ENCODE measurements at regions of chr22 and their contacts with region 1.

Region 1: GRCh38 chr22:29581807-29582206 is 894 bp upstream of the NIPSNAP1 start:
- DNase-seq: no peak
- ATAC-seq: no peak
- H3K4me3 Mint-ChIP-seq: peak overlapping the region; percentile 89
- H3K27ac Mint-ChIP-seq: peak overlapping the region; percentile 93
- H3K4me1 Mint-ChIP-seq: peaks cover 8% of the 10 kb centered on the region
- H3K27me3 Mint-ChIP-seq: no peaks in the 10 kb centered on the region

Region 2: GRCh38 chr22:29387921-29388758 is 193.7 kb before region 1 on chr22 and contains the start of gene AP1B1:
- CTCF ChIA-PET with region 1: no interaction called
- POLR2A ChIA-PET with region 1: no interaction called
- intact Hi-C with region 1: loop called in 1 of 2 experiments (anchors 1 kb)
- DNase-seq: peak; percentile 97
- ATAC-seq: peak; percentile 99
- H3K4me3 Mint-ChIP-seq: peak within 1 kb of the TSS; percentile 87
- H3K27ac Mint-ChIP-seq: peak within 1 kb of the TSS; percentile 83
- H3K4me1 Mint-ChIP-seq: peaks cover 30% of the 10 kb centered on the region
- H3K27me3 Mint-ChIP-seq: no peaks in the 10 kb centered on the region
- total RNA-seq, gene AP1B1: 56.6 to 59.9 TPM

Region 3: DNA sequence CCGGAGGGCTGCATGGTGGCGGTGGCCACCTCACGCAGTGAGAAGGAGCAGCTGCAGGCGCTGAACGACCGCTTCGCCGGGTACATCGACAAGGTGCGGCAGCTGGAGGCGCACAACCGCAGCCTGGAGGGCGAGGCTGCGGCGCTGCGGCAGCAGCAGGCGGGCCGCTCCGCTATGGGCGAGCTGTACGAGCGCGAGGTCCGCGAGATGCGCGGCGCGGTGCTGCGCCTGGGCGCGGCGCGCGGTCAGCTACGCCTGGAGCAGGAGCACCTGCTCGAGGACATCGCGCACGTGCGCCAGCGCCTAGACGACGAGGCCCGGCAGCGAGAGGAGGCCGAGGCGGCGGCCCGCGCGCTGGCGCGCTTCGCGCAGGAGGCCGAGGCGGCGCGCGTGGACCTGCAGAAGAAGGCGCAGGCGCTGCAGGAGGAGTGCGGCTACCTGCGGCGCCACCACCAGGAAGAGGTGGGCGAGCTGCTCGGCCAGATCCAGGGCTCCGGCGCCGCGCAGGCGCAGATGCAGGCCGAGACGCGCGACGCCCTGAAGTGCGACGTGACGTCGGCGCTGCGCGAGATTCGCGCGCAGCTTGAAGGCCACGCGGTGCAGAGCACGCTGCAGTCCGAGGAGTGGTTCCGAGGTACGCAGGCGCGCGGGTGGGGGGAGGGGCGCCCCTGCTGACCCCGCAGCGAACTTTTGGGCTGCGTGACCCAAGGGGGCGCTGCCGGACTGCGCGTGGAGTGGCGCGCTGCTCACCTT is 101.1 kb before region 1 on chr22:
- CTCF ChIA-PET with region 1: no interaction called
- POLR2A ChIA-PET with region 1: no interaction called
- intact Hi-C with region 1: no loop called
- DNase-seq: peak; percentile 57
- ATAC-seq: peak; percentile 61
- H3K4me3 Mint-ChIP-seq: peak overlapping the region; percentile 38
- H3K27ac Mint-ChIP-seq: no peak overlapping the region
- H3K4me1 Mint-ChIP-seq: peaks cover 8% of the 10 kb centered on the region
- H3K27me3 Mint-ChIP-seq: peaks cover 43% of the 10 kb centered on the region

Region 4: GRCh38 chr22:29553351-29554224 is 28.2 kb before region 1 on chr22 and contains the start of gene THOC5:
- CTCF ChIA-PET with region 1: no interaction called
- POLR2A ChIA-PET with region 1: no interaction called
- intact Hi-C with region 1: loop called (anchors 1 kb)
- DNase-seq: peak; percentile 94
- ATAC-seq: peak; percentile 99
- H3K4me3 Mint-ChIP-seq: peak within 1 kb of the TSS; percentile 96
- H3K27ac Mint-ChIP-seq: peak within 1 kb of the TSS; percentile 92
- H3K4me1 Mint-ChIP-seq: peaks cover 13% of the 10 kb centered on the region
- H3K27me3 Mint-ChIP-seq: no peaks in the 10 kb centered on the region
- total RNA-seq, gene THOC5: 52.4 to 65.7 TPM

Region 5: GRCh38 chr22:29569011-29569678 is 12.7 kb before region 1 on chr22:
- CTCF ChIA-PET with region 1: no interaction called
- POLR2A ChIA-PET with region 1: no interaction called
- intact Hi-C with region 1: no loop called
- DNase-seq: no peak
- ATAC-seq: no peak
- H3K4me3 Mint-ChIP-seq: no peak overlapping the region
- H3K27ac Mint-ChIP-seq: no peak overlapping the region
- H3K4me1 Mint-ChIP-seq: no peaks in the 10 kb centered on the region
- H3K27me3 Mint-ChIP-seq: no peaks in the 10 kb centered on the region

Region 6: DNA sequence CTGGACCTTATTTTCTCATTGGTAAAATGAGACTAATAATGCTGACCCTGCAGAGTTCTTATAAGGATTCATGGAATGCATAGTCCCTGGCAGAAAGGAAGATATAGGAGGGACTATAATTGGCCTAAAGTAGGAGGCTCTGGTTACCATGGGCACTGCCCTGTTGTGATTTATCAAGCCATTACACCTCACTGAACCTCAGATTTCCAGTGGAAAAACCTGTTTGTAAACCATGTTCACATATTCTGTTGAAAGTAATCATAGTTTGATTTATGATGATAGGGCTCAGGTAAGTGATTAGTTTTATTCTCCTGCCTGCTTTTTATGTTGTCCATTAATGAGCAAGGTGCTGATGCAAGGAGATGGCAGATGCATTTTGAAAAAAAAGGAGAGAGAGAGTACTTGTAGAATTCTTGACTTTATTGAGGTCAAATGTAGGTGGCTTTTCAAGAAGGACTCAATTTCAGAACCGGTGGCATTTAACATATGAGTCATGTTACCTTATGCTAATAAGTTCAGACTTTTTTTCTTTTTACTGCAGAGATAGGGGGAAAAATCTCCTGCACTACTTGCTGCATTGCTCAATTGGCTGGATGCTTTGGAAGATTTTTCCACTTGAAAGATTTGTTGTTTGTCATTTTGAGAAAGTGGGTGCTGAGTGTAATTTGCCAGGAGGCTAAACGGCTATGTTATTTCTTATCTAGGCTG is 36.3 kb after region 1 on chr22:
- CTCF ChIA-PET with region 1: no interaction called
- POLR2A ChIA-PET with region 1: no interaction called
- intact Hi-C with region 1: loop called in 1 of 2 experiments (anchors 1 kb)
- DNase-seq: no peak
- ATAC-seq: peak; percentile 89
- H3K4me3 Mint-ChIP-seq: peak overlapping the region; percentile 15
- H3K27ac Mint-ChIP-seq: peak overlapping the region; percentile 32
- H3K4me1 Mint-ChIP-seq: peaks cover 42% of the 10 kb centered on the region
- H3K27me3 Mint-ChIP-seq: no peaks in the 10 kb centered on the region

Region 7: DNA sequence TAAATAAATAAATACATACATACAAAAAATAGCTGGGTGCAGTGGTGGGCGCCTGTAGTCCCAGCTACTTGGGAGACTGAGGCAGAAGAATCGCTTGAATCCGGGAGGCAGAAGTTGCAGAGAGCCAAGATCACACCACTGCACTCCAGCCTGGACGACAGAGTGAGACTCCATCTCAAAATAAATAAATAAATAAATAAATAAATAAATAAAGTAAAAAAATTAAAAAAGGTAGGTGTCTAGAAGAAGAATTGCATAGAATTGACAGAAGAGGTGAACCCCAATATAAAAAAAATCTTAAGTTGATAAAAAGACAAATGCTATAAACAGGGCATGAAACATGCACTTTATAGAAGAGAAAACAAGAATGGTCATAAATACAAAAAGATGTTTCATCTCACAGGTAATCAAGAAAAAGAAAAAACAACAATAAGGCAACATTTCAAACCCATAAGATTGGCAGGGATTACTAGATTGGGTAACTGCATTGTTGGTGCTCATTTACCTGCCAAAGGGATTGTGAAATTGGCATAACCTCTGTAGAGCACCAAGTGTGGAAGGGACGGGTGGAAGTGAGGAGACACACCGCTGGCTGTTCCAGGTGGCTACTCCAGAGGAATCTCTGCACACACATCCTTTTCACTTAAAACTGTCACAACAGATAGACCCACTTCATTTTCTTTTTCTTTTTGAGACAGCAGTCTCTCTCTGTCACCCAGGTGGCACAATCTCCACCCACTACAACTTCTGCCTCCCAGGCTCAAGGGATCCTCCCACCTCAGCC is 66.3 kb after region 1 on chr22:
- CTCF ChIA-PET with region 1: no interaction called
- POLR2A ChIA-PET with region 1: no interaction called
- intact Hi-C with region 1: no loop called
- DNase-seq: no peak
- ATAC-seq: no peak
- H3K4me3 Mint-ChIP-seq: no peak overlapping the region
- H3K27ac Mint-ChIP-seq: no peak overlapping the region
- H3K4me1 Mint-ChIP-seq: no peaks in the 10 kb centered on the region
- H3K27me3 Mint-ChIP-seq: no peaks in the 10 kb centered on the region

Region 8: GRCh38 chr22:29883045-29883774 is 301.4 kb after region 1 on chr22 and contains the start of gene MTMR3:
- CTCF ChIA-PET with region 1: no interaction called
- POLR2A ChIA-PET with region 1: no interaction called
- intact Hi-C with region 1: loop called in 1 of 2 experiments (anchors 1 kb)
- DNase-seq: peak; percentile 95
- ATAC-seq: peak; percentile 83
- H3K4me3 Mint-ChIP-seq: peak within 1 kb of the TSS; percentile 89
- H3K27ac Mint-ChIP-seq: peak within 1 kb of the TSS; percentile 84
- H3K4me1 Mint-ChIP-seq: peaks cover 6% of the 10 kb centered on the region
- H3K27me3 Mint-ChIP-seq: no peaks in the 10 kb centered on the region
- total RNA-seq, gene MTMR3: 19.2 to 22.8 TPM

Measured in activated CD4-positive, alpha-beta T cell treated with anti-CD3 and anti-CD28 coated beads for 36 hours (primary cell).